ENCODE measurements at regions of chr7 and their contacts with region 1.

Region 1: DNA sequence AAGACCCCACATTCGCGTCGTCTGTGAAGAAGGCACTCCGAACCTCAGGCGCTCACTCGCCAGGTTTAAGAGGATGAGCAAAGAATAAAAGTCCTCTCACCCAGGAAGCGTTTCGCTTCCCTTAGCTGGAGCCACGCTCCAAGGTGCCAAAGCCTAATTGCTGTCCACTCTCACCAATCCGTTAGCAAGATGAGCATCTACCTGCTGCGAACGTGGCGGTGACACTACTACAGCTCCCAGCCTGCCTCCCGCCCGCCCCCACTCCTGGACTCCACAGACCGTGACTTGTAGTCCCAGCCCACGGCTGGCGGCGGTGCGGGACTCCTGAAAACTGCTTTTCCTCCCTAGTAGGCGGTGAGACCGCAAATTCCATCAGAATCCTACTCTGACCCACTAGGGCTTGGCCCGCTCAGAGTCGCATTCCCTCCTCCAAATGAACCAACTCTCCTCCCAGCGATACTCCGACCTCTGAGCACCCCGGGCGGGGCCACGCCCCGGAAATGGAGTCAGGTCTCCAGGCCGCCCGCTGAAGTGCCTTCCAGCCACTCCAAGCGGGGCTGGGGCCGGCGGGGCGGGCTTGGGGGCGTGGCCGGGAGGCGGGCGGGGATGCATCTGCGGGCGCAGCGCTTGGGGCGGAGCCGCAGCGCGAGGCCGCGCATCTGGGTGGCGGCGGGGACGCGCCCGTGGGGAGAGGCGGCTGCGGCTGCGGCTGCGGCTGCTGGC is 521 bp upstream of the PTPN12 start:
- DNase-seq: peak; percentile 92 to 99
- H3K4me3 ChIP-seq: peak overlapping the region; percentile 97
- H3K27ac ChIP-seq: peak overlapping the region; percentile 96
- H3K4me1 ChIP-seq: peaks cover 21% of the 10 kb centered on the region
- H3K27me3 ChIP-seq: no peaks in the 10 kb centered on the region
- CTCF ChIP-seq: no peak

Region 2: DNA sequence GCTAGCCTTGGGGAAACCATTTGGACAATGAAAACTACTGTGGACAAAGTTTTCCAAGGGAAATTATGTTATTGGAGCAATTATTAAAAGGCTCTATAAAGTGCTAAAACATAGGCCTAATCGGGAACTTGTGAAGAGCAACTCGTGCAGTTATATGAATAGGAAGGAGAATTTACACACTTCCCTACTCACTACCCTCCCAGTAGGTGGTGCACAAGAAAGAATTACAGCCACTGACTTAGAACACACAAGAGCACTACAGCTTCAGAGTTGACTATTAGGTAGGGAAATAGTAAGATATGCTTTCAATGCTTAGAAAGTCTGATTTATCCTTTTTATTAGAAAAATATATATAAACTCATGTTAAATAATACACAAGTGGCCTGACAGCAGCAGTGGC is 167.6 kb before region 1 on chr7:
- CTCF ChIA-PET with region 1: no interaction called
- POLR2A ChIA-PET with region 1: interaction called, 18 read pairs
- intact Hi-C with region 1: no loop called
- DNase-seq: no peak
- H3K4me3 ChIP-seq: no peak overlapping the region
- H3K27ac ChIP-seq: no peak overlapping the region
- H3K4me1 ChIP-seq: no peaks in the 10 kb centered on the region
- H3K27me3 ChIP-seq: no peaks in the 10 kb centered on the region
- CTCF ChIP-seq: no peak

Region 3: DNA sequence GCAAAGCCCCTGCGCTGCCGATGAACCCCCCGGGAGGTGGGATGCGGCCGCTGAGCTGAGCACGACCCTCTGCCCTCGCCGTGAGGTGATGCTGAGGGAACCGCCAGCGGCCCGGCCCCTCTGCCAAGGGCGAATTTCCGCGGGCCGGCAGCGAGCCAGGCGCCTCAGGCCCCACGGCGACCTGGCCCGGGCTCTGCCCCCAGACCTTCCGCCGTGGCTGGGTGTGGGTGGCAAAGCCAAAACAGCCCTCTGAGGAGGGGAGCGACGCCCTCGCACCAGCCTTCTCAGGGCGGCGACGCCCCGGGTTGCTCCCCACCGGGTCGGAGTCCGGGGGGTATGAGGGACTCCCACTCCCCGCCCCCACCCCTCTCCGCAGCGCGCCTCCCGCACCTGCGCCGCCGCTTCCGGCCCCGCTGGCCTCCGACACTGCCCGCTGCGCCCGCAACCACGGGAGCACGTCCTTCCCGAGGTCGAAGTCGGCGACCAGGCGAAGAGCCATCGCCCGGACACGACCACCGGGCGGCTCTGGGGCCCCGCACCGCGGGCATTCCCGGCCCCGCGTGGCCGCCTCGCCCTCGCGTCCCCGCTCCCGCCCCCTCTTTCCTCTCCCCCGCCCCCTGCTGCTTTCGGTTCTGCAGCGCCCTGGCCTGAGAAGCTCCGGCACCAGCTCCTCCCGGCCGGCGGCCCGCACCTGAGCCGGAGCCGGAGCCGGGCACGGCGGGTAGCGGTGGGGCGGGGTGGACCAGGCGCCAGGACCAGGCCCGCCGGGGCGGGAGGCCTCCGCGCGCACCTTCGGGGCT is 120.6 kb before region 1 on chr7 and contains the start of gene GSAP:
- CTCF ChIA-PET with region 1: interaction called, 3 read pairs
- POLR2A ChIA-PET with region 1: interaction called, 17 read pairs
- intact Hi-C with region 1: no loop called
- DNase-seq: peak in 1 of 2 experiments; percentile 61
- H3K4me3 ChIP-seq: peak within 1 kb of the TSS; percentile 87
- H3K27ac ChIP-seq: peak within 1 kb of the TSS; percentile 80
- H3K4me1 ChIP-seq: peaks cover 44% of the 10 kb centered on the region
- H3K27me3 ChIP-seq: no peaks in the 10 kb centered on the region
- CTCF ChIP-seq: no peak
- total RNA-seq, gene GSAP: 15.6 and 17.2 TPM in 2 replicates

Region 4: GRCh38 chr7:77425101-77426051 is 111.2 kb before region 1 on chr7:
- CTCF ChIA-PET with region 1: interaction called, 5 read pairs
- POLR2A ChIA-PET with region 1: interaction called, 7 read pairs
- intact Hi-C with region 1: loop called (anchors 5 kb)
- DNase-seq: peak; percentile 8 to 60
- H3K4me3 ChIP-seq: peak overlapping the region; percentile 26; the same call in 1 of the 2 replicates
- H3K27ac ChIP-seq: peak overlapping the region; percentile 80
- H3K4me1 ChIP-seq: peaks cover 59% of the 10 kb centered on the region
- H3K27me3 ChIP-seq: no peaks in the 10 kb centered on the region
- CTCF ChIP-seq: no peak

Region 5: GRCh38 chr7:77461241-77461640 is 75.3 kb before region 1 on chr7:
- CTCF ChIA-PET with region 1: no interaction called
- POLR2A ChIA-PET with region 1: no interaction called
- intact Hi-C with region 1: loop called (anchors 1 kb)
- DNase-seq: peak; percentile 16 to 59
- H3K4me3 ChIP-seq: no peak overlapping the region
- H3K27ac ChIP-seq: no peak overlapping the region
- H3K4me1 ChIP-seq: peaks cover 28% of the 10 kb centered on the region
- H3K27me3 ChIP-seq: no peaks in the 10 kb centered on the region
- CTCF ChIP-seq: no peak

Region 6: DNA sequence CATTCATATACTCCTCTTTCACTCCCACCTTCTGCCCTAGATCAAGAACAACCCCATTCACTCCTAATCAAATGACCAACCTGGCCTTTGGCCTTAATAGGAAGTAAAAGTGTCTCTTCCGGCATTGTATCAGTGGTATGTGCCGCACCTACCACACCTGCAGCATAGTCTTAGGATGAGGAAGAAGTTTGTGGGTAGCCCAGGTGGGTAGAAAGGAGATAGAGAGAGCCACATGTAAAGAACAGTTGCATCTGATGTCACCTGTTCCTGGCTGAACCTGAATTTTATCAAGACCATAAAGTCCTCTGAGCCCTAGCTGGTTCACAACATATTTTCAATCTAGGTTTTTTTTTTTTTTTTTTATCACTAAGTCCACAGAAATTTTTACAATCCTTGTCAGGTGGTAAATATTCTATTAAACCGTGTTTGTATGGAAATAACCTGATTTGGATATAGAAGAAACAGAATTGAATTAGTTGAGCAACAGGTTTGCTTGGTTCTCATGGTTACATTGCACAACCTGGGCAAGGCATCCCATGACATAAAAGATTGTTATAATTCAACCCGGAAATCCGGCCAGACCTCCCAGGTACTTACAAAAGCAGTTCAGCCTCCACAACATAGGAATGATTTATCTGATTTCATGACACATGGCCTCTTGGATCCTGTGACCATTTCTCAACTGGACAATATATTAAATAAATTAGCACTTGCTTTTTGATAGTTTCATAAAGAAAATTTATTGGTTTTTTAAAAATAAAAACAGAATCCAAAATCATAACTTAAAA is 54.8 kb before region 1 on chr7:
- CTCF ChIA-PET with region 1: no interaction called
- POLR2A ChIA-PET with region 1: no interaction called
- intact Hi-C with region 1: loop called (anchors 1 kb)
- DNase-seq: peak; percentile 73 to 95
- H3K4me3 ChIP-seq: 0 out of 2 replicates have a peak overlapping the region, but pooled peaks have one; percentile 3
- H3K27ac ChIP-seq: peak overlapping the region; percentile 94
- H3K4me1 ChIP-seq: peaks cover 44% of the 10 kb centered on the region
- H3K27me3 ChIP-seq: no peaks in the 10 kb centered on the region
- CTCF ChIP-seq: no peak

Region 7: DNA sequence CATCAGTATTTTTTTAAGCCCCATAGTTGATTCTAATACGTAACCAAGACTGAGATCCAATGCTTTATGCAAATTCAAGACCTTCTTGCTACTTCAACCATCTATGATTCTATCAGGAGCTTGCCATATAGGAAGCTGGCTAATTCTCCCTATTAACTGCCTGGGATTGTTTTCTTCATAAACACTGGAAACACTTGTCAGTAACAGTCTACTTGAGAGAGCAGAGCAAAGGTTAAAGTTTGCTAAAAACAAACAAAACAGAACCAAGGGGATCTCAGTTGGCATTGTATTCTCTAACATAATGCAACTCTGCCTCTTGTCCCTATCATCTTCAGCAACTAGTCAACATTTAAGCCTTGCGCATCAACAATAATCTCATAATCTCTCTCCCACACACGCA is 20.5 kb before region 1 on chr7:
- CTCF ChIA-PET with region 1: no interaction called
- POLR2A ChIA-PET with region 1: interaction called, 18 read pairs
- intact Hi-C with region 1: no loop called
- DNase-seq: no peak
- H3K4me3 ChIP-seq: no peak overlapping the region
- H3K27ac ChIP-seq: no peak overlapping the region
- H3K4me1 ChIP-seq: no peaks in the 10 kb centered on the region; the same call in 1 of the 2 replicates
- H3K27me3 ChIP-seq: no peaks in the 10 kb centered on the region
- CTCF ChIP-seq: no peak

Region 8: GRCh38 chr7:78326876-78327275 is 790.3 kb after region 1 on chr7:
- CTCF ChIA-PET with region 1: no interaction called
- POLR2A ChIA-PET with region 1: no interaction called
- intact Hi-C with region 1: no loop called
- DNase-seq: peak in 1 of 2 experiments; percentile 70
- H3K4me3 ChIP-seq: no peak overlapping the region
- H3K27ac ChIP-seq: no peak overlapping the region
- H3K4me1 ChIP-seq: no peaks in the 10 kb centered on the region
- H3K27me3 ChIP-seq: no peaks in the 10 kb centered on the region
- CTCF ChIP-seq: no peak

Measured in PC-9 (cell line).